ENCODE measurements at regions of chr1 and their contacts with region 1.

Region 1: GRCh38 chr1:163528710-163529348 is 207.1 kb downstream of the NUF2 start:
- DNase-seq: no peak
- H3K4me3 Mint-ChIP-seq: no peak overlapping the region
- H3K27ac Mint-ChIP-seq: no peak overlapping the region
- H3K4me1 Mint-ChIP-seq: no peaks in the 10 kb centered on the region
- H3K27me3 Mint-ChIP-seq: peaks cover 2% of the 10 kb centered on the region

Region 2: GRCh38 chr1:163361123-163361934 is 167.5 kb before region 1 on chr1:
- intact Hi-C with region 1: loop called (anchors 5 kb)
- DNase-seq: no peak
- H3K4me3 Mint-ChIP-seq: no peak overlapping the region
- H3K27ac Mint-ChIP-seq: no peak overlapping the region
- H3K4me1 Mint-ChIP-seq: peaks cover 9% of the 10 kb centered on the region
- H3K27me3 Mint-ChIP-seq: peaks cover 16% of the 10 kb centered on the region

Region 3: DNA sequence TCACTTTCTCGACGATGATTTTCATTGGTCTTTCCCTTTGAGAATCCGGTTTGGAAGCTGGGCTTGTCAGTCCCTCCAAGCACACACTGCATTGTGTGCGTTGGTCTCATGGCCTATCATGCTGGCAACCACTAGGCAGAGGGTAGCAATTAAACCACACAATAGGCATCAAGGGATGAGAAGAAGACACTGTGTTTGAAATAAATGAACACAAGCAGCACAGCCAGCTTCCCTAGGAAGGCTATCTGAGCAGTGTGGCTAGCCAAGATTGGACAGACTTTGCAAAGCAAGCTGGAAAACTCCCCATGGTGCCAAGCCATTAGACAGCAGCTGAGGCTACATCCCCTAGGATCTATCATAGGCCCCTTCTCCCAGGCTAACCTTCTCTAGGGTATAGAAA is 81.7 kb after region 1 on chr1:
- intact Hi-C with region 1: no loop called
- DNase-seq: no peak
- H3K4me3 Mint-ChIP-seq: no peak overlapping the region
- H3K27ac Mint-ChIP-seq: no peak overlapping the region
- H3K4me1 Mint-ChIP-seq: no peaks in the 10 kb centered on the region
- H3K27me3 Mint-ChIP-seq: no peaks in the 10 kb centered on the region

Region 4: GRCh38 chr1:163844459-163844858 is 315.6 kb after region 1 on chr1:
- intact Hi-C with region 1: no loop called
- DNase-seq: no peak
- H3K4me3 Mint-ChIP-seq: no peak overlapping the region
- H3K27ac Mint-ChIP-seq: no peak overlapping the region
- H3K4me1 Mint-ChIP-seq: no peaks in the 10 kb centered on the region
- H3K27me3 Mint-ChIP-seq: no peaks in the 10 kb centered on the region

Region 5: GRCh38 chr1:164786980-164787833 is 1258.4 kb after region 1 on chr1:
- intact Hi-C with region 1: loop called (anchors 2 kb)
- DNase-seq: peak; percentile 22
- H3K4me3 Mint-ChIP-seq: no peak overlapping the region
- H3K27ac Mint-ChIP-seq: no peak overlapping the region
- H3K4me1 Mint-ChIP-seq: peaks cover 6% of the 10 kb centered on the region
- H3K27me3 Mint-ChIP-seq: peaks cover 4% of the 10 kb centered on the region

Measured in activated T-helper 1 cell treated with anti-CD3 and anti-CD28 coated beads, Interleukin-12 subunit alpha, Interleukin-12 subunit beta, Interleukin-2, Interleukin-4 antibody, amounts not matched to agents 30 ng/mL and 10 ng/mL and 1 ng/mL, durations not matched to agents 14 hours and 24 hours and 36 hours (primary cell).